ENCODE measurements at regions of chr2 and their contacts with region 1.

Region 1: GRCh38 chr2:237060534-237061312 is 25.0 kb upstream of the COPS8 start:
- DNase-seq: peak; percentile 72
- ATAC-seq: peak; percentile 88
- H3K4me3 ChIP-seq: no peak overlapping the region
- H3K27ac ChIP-seq: no peak overlapping the region
- H3K4me1 ChIP-seq: peaks cover 4% of the 10 kb centered on the region; the same call in 1 of the 2 replicates
- H3K27me3 ChIP-seq: 0 out of 2 replicates have a peak, but pooled peaks cover 2% of the 10 kb centered on the region
- CTCF ChIP-seq: peak; percentile 86
- POLR2A ChIP-seq: no peak
- RAD21 ChIP-seq: peak; percentile 90

Region 2: GRCh38 chr2:236180831-236181453 is 879.8 kb before region 1 on chr2:
- CTCF ChIA-PET with region 1: no interaction called
- POLR2A ChIA-PET with region 1: no interaction called
- dilution Hi-C with region 1: no loop called
- in situ Hi-C with region 1: no loop called
- intact Hi-C with region 1: loop called (anchors 5 kb)
- DNase-seq: peak; percentile 65
- ATAC-seq: peak; percentile 40
- H3K4me3 ChIP-seq: no peak overlapping the region
- H3K27ac ChIP-seq: no peak overlapping the region
- H3K4me1 ChIP-seq: peaks cover 6% of the 10 kb centered on the region; the same call in 1 of the 2 replicates
- H3K27me3 ChIP-seq: peaks cover 8% of the 10 kb centered on the region; the same call in 1 of the 2 replicates
- CTCF ChIP-seq: peak; percentile 81
- POLR2A ChIP-seq: no peak
- RAD21 ChIP-seq: peak; percentile 78

Region 3: DNA sequence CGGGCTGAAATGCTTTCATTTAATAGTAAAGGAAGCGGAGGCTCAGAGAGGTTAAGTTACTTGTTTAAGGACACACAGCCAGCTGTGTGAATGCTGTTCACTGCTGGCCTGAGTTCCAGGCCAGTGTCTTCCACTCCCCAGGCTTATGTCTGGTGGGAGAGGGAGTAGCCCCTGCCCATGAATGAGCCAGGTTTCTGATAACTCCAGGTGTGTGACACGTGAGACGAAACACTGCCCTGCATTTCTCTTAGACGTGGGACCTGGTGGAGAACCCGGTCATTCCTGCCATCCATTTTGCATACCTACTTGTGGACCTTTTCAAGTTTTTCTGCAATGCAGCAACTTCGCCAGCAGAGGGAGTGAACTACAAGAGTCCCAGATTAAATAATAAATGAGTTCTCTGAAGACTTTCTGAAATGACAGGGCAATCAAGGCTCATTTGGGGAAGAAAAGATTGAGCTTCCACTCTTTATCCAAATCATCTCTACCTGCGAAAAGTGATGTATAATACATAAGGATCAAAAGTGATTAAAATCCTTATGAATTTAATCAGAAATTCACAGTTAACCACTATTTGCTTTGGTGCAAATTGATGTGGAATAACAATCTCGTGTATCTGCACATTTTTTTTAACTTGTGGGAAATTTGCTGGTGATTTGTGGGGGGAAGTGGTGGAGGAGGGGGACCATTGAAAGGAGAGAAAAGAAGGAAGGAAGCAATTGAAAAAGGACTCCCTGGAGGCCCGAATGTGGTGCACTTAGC is 717.1 kb before region 1 on chr2:
- CTCF ChIA-PET with region 1: interaction called, 3 read pairs
- POLR2A ChIA-PET with region 1: no interaction called
- dilution Hi-C with region 1: no loop called
- in situ Hi-C with region 1: loop called (anchors 10 kb)
- intact Hi-C with region 1: loop called (anchors 1 kb)
- DNase-seq: peak; percentile 75
- ATAC-seq: peak; percentile 84
- H3K4me3 ChIP-seq: no peak overlapping the region
- H3K27ac ChIP-seq: no peak overlapping the region
- H3K4me1 ChIP-seq: no peaks in the 10 kb centered on the region
- H3K27me3 ChIP-seq: peaks cover 4% of the 10 kb centered on the region
- CTCF ChIP-seq: peak; percentile 79
- POLR2A ChIP-seq: no peak
- RAD21 ChIP-seq: peak; percentile 62

Region 4: GRCh38 chr2:236352761-236353593 is 707.7 kb before region 1 on chr2:
- CTCF ChIA-PET with region 1: interaction called, 3 read pairs
- POLR2A ChIA-PET with region 1: no interaction called
- dilution Hi-C with region 1: no loop called
- in situ Hi-C with region 1: loop called (anchors 10 kb)
- intact Hi-C with region 1: loop called (anchors 1 kb)
- DNase-seq: peak; percentile 29
- ATAC-seq: peak; percentile 72
- H3K4me3 ChIP-seq: no peak overlapping the region
- H3K27ac ChIP-seq: no peak overlapping the region
- H3K4me1 ChIP-seq: no peaks in the 10 kb centered on the region
- H3K27me3 ChIP-seq: peaks cover 7% of the 10 kb centered on the region; the same call in 1 of the 2 replicates
- CTCF ChIP-seq: peak; percentile 83
- POLR2A ChIP-seq: no peak
- RAD21 ChIP-seq: peak; percentile 75

Region 5: GRCh38 chr2:236512902-236513435 is 547.8 kb before region 1 on chr2:
- CTCF ChIA-PET with region 1: interaction called, 5 read pairs
- POLR2A ChIA-PET with region 1: no interaction called
- dilution Hi-C with region 1: no loop called
- in situ Hi-C with region 1: loop called (anchors 10 kb)
- intact Hi-C with region 1: loop called (anchors 1 kb)
- DNase-seq: peak; percentile 34
- ATAC-seq: peak; percentile 89
- H3K4me3 ChIP-seq: no peak overlapping the region
- H3K27ac ChIP-seq: no peak overlapping the region
- H3K4me1 ChIP-seq: no peaks in the 10 kb centered on the region
- H3K27me3 ChIP-seq: peaks cover 7% of the 10 kb centered on the region
- CTCF ChIP-seq: peak; percentile 55
- POLR2A ChIP-seq: no peak
- RAD21 ChIP-seq: peak; percentile 58